BJ (cell line): ENCODE measurements at regions of chr12 and their contacts with region 1.

Region 1: GRCh38 chr12:122356192-122356635 is 66.3 kb downstream of the CLIP1 start:
- DNase-seq: no peak
- H3K4me3 ChIP-seq: no peak overlapping the region
- H3K27me3 ChIP-seq: no peaks in the 10 kb centered on the region
- CTCF ChIP-seq: peak; percentile 76

Region 2: GRCh38 chr12:122323310-122324021 is 32.7 kb before region 1 on chr12:
- CTCF ChIA-PET with region 1: interaction called, 12 read pairs
- POLR2A ChIA-PET with region 1: no interaction called
- DNase-seq: no peak
- H3K4me3 ChIP-seq: no peak overlapping the region
- H3K27me3 ChIP-seq: no peaks in the 10 kb centered on the region
- CTCF ChIP-seq: no peak

Region 3: GRCh38 chr12:122336015-122336946 is 19.9 kb before region 1 on chr12:
- CTCF ChIA-PET with region 1: interaction called, 69 read pairs
- POLR2A ChIA-PET with region 1: no interaction called
- DNase-seq: no peak
- H3K4me3 ChIP-seq: no peak overlapping the region
- H3K27me3 ChIP-seq: no peaks in the 10 kb centered on the region
- CTCF ChIP-seq: peak; percentile 79

Region 4: DNA sequence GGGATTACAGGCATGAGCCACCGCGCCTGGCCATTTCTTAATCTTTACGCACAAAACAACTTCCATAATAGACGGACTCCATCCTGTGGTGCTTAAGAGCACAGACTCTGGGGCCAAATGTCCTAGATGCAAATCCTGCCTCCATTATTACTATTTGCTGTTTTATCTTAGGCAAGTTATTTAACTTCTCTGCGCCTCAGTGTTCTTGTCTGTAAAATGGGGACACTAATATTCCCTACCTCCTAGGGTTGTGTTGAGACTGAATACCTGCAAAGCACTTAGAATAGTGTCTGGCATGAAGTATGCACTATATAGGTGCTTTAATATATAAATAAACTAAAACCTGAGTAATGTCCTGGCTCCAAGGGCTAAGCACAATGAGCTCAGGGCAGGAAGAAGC is 10.2 kb before region 1 on chr12:
- CTCF ChIA-PET with region 1: interaction called, 69 read pairs
- POLR2A ChIA-PET with region 1: no interaction called
- DNase-seq: no peak
- H3K4me3 ChIP-seq: no peak overlapping the region
- H3K27me3 ChIP-seq: no peaks in the 10 kb centered on the region
- CTCF ChIP-seq: no peak

Region 5: GRCh38 chr12:122366685-122367475 is 10.7 kb after region 1 on chr12:
- CTCF ChIA-PET with region 1: interaction called, 15 read pairs
- POLR2A ChIA-PET with region 1: no interaction called
- DNase-seq: peak; percentile 92
- H3K4me3 ChIP-seq: no peak overlapping the region
- H3K27me3 ChIP-seq: no peaks in the 10 kb centered on the region
- CTCF ChIP-seq: no peak